AG04449 (cell line): ENCODE measurements at regions of chr13 and their contacts with region 1.

Region 1: DNA sequence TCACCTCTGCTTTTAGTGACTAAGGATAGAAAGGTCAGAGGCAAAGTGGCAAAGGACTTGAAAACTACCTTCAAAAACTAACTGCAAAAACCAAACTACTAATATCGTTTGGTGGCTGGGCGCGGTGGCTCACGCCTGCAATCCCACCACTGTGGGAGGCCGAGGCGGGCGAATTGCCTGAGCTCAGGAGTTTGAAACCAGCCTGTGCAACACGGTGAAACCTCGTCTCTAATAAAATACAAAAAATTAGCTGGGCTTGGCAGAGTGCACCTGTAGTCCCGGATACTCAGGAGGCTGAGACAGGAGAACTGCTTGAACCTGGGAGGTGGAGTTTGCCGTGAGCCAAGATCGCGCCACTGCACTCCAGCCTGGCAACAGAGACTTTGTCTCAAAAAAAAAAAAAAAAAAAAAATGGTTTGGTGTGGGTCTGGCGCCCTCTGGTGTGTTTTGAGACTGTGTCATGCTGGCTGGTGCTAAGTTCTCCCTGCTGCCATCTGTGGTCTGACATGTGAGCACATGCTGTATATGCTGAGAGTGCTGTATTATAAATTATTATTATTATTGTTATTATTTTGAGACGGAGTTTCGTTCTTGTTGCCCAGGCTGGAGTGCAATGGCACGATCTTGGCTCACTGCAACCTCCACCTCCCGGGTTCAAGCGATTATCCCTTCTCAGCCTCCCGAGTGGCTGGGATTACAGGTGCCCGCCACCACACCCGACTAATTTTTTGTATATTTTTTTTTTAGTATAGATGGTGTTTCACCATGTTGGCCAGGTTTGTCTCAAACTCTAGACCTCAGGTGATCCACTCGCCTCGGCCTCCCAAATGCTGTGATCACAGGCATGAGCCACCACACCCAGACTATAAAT is 36.0 kb upstream of the RNF17 start:
- DNase-seq: peak; percentile 46
- H3K4me3 ChIP-seq: no peak overlapping the region
- CTCF ChIP-seq: peak; percentile 80

Region 2: DNA sequence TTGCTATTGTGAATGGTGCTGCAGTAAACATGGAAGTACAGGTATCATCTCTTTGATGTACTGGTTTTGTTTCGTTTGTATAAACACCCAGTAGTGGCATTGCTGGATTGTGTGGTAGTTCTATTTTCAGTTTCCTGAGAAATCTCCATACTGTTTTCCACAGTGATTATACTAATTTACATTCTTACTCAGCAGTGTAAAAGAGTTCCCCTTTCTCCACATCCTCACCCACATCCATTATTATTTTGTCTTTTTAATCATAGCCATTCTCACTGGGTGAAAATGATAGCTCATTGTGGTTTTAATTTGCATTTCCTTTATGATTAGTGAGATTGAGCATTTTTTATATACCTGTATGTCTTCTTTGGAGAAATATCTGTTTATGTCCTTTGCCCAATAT is 153.1 kb before region 1 on chr13:
- CTCF ChIA-PET with region 1: interaction called, 22 read pairs
- POLR2A ChIA-PET with region 1: no interaction called
- DNase-seq: no peak
- H3K4me3 ChIP-seq: no peak overlapping the region
- CTCF ChIP-seq: no peak

Region 3: DNA sequence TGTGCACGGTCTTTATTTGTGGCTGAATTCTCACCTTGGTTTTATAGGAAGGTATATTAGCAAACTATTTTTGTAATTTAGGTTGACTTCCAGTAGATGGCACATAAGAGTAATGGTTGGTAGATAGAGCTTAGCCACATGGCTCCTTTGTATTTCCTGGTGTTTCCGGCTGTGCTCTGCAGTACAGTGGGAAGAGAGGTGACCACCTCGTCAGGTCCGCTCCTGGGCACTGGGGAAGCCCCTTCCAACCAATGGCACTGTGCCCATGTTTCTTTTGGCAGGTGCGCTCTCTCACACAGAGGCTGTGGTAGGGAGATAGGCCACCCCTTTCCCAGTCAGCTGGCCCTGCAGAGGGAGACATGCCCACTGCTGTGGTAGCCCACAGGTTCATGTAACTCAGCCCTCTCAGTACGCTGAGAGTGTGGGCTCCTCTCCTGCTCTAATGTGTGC is 122.0 kb before region 1 on chr13:
- CTCF ChIA-PET with region 1: interaction called, 119 read pairs
- POLR2A ChIA-PET with region 1: no interaction called
- DNase-seq: no peak
- H3K4me3 ChIP-seq: no peak overlapping the region
- CTCF ChIP-seq: peak; percentile 27

Region 4: DNA sequence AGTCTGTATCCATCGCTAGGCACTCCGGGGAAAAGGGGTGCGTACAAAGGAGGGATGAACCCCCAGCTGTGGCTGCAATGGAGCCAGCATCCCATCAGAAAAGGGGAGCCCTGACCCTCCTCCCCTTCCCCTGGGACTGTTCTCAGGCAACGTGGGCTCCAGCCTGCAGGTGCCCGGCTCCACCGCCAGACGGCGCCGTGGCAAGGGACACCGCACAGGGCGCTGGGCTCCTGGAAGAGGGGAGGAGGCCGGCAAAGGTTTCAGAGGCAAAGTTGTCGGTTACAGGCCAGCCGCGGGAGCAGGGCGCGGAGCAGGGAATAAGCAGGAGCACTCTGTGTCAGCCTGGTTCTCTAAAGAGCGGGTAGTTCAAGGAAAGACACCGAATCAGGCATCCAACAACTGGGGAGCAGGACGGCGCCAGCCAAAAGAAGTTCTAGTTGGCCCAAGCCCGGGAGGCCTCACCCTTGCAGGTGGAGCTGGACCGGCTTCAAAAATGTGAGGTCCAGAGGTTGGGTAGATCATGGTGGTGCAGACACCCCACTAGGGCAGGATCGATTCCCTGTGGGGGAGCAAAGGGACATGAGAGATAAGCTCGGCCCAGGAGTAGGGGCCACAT is 100.8 kb before region 1 on chr13:
- CTCF ChIA-PET with region 1: interaction called, 26 read pairs
- POLR2A ChIA-PET with region 1: no interaction called
- DNase-seq: no peak
- H3K4me3 ChIP-seq: no peak overlapping the region
- CTCF ChIP-seq: peak; percentile 88

Region 5: DNA sequence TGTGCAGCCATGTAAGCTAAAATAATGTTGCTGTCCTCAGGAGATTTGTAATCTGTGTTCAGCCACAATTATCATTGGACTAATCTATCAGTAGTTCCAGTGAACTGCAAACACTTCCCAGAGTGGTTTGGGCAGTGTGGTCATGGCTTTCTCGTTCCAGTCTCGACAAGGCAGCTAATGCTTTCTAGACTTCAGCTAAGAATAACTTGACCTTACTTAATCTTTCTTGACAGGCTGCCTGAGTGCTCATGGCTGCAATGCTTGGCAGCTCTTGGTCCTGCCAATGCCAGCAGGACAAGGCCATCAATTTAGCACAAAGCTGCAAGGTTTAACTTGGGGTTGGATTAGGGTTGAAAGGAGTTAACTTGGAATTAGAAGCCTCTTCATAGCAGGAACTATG is 14.9 kb before region 1 on chr13:
- CTCF ChIA-PET with region 1: interaction called, 15 read pairs
- POLR2A ChIA-PET with region 1: no interaction called
- DNase-seq: no peak
- H3K4me3 ChIP-seq: no peak overlapping the region
- CTCF ChIP-seq: no peak